Endothelial cell of umbilical vein (primary cell): ENCODE measurements at regions of chr4 and their contacts with region 1.

Region 1: GRCh38 chr4:11743236-11743635 is 314.5 kb upstream of the HS3ST1 start:
- DNase-seq: peak; percentile 82
- H3K4me3 ChIP-seq: peak overlapping the region in 1 of 3 experiments; percentile 56
- H3K27ac ChIP-seq: peak overlapping the region; percentile 82
- H3K4me1 ChIP-seq: peaks cover 77% of the 10 kb centered on the region
- H3K27me3 ChIP-seq: no peaks in the 10 kb centered on the region
- CTCF ChIP-seq: no peak
- POLR2A ChIP-seq: no peak

Region 2: GRCh38 chr4:11228546-11228945 is 514.7 kb before region 1 on chr4:
- CTCF ChIA-PET with region 1: no interaction called
- POLR2A ChIA-PET with region 1: no interaction called
- dilution Hi-C with region 1: no loop called
- intact Hi-C with region 1: no loop called
- DNase-seq: no peak
- H3K4me3 ChIP-seq: no peak overlapping the region
- H3K27ac ChIP-seq: no peak overlapping the region
- H3K4me1 ChIP-seq: peaks cover 2% of the 10 kb centered on the region
- H3K27me3 ChIP-seq: no peaks in the 10 kb centered on the region
- CTCF ChIP-seq: no peak
- POLR2A ChIP-seq: no peak

Region 3: DNA sequence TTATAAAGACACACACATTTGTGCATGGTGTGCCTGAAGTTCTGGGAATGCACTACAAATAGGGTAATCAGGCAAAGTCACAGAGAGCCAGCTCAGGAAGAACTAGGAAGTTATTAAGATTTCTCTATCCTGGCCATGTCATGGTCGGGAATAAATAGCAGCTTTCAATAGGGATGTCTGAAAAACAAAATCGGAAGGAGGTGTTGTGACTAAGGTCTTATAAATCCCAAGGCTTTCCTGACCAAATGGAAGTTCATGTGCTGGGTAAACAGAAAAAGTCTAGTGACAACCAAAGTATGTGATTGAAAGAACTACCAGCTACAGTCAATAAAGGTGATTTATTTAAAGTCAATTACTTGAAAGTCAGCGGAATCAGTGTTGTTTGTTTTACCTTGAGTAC is 52.0 kb before region 1 on chr4:
- CTCF ChIA-PET with region 1: no interaction called
- POLR2A ChIA-PET with region 1: no interaction called
- dilution Hi-C with region 1: no loop called
- intact Hi-C with region 1: loop called (anchors 1 kb)
- DNase-seq: peak; percentile 61
- H3K4me3 ChIP-seq: no peak overlapping the region
- H3K27ac ChIP-seq: peak overlapping the region; percentile 55
- H3K4me1 ChIP-seq: peaks cover 22% of the 10 kb centered on the region
- H3K27me3 ChIP-seq: no peaks in the 10 kb centered on the region
- CTCF ChIP-seq: no peak
- POLR2A ChIP-seq: no peak

Region 4: GRCh38 chr4:11765849-11766453 is 22.7 kb after region 1 on chr4:
- CTCF ChIA-PET with region 1: interaction called, 27 read pairs
- POLR2A ChIA-PET with region 1: no interaction called
- dilution Hi-C with region 1: no loop called
- intact Hi-C with region 1: no loop called
- DNase-seq: peak; percentile 75
- H3K4me3 ChIP-seq: no peak overlapping the region
- H3K27ac ChIP-seq: no peak overlapping the region
- H3K4me1 ChIP-seq: no peaks in the 10 kb centered on the region
- H3K27me3 ChIP-seq: no peaks in the 10 kb centered on the region
- CTCF ChIP-seq: peak; percentile 61 to 70
- POLR2A ChIP-seq: no peak

Region 5: DNA sequence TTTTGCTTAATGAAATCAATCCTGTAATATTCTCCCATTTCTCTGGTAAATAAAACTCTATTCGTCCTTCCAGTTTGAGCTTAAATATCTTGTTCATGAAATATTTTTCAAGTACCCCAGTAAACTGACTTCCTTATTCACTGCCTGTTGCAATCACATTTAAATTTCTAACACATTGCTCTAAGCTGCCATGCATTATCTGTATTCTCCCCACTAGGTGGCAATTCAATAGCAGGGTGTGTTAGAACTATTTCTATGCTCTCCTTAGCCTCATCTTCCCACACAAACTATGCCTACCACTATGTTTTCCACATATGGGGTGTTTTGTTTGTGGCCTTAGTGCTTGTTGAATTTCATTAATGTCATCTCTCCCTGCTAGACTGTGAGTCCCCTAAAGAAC is 62.6 kb after region 1 on chr4:
- CTCF ChIA-PET with region 1: interaction called, 9 read pairs
- POLR2A ChIA-PET with region 1: no interaction called
- dilution Hi-C with region 1: no loop called
- intact Hi-C with region 1: loop called (anchors 1 kb)
- DNase-seq: peak; percentile 81
- H3K4me3 ChIP-seq: no peak overlapping the region
- H3K27ac ChIP-seq: peak overlapping the region; percentile 45
- H3K4me1 ChIP-seq: peaks cover 21% of the 10 kb centered on the region
- H3K27me3 ChIP-seq: no peaks in the 10 kb centered on the region
- CTCF ChIP-seq: peak; percentile 58 to 65
- POLR2A ChIP-seq: no peak